ENCODE measurements at regions of chr10 and their contacts with region 1.

Region 1: GRCh38 chr10:88401671-88402347 is 181.3 kb downstream of the RNLS start:
- DNase-seq: no peak
- H3K4me3 ChIP-seq: no peak overlapping the region
- H3K27me3 ChIP-seq: no peaks in the 10 kb centered on the region
- CTCF ChIP-seq: peak; percentile 50; the same call in 1 of the 2 replicates

Region 2: GRCh38 chr10:88343761-88344484 is 57.9 kb before region 1 on chr10:
- CTCF ChIA-PET with region 1: no interaction called
- POLR2A ChIA-PET with region 1: no interaction called
- DNase-seq: no peak
- H3K4me3 ChIP-seq: no peak overlapping the region
- H3K27me3 ChIP-seq: no peaks in the 10 kb centered on the region
- CTCF ChIP-seq: no peak

Region 3: DNA sequence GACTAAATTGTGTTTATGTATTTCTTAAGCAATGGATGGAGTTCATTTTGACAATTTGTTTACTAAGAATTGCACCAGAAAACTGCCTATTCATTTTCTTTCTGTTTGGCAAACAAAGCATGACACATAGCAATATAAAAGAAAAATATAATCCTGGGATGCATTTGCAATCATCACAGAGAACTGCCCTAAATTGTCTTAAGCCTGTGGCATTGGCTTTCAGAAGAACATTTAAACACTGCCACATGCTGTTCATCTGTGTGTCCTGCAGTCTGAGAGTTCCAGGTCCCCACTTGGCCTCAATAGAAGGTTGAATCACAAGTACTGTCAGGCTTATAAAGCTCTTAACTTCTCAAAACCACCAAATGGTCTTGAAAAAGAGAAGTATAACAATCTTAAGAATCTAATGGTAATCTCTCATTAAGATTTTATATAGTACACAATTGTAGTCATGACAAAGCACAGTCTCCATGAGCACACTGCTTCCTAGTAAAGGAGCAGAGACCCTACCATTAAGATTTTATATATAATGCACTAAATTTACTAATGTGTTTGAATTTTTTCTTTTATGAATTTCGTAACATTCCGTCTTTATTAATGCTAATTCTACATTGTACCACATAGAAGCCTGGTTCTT is 151.4 kb after region 1 on chr10:
- CTCF ChIA-PET with region 1: interaction called, 19 read pairs
- POLR2A ChIA-PET with region 1: no interaction called
- DNase-seq: peak; percentile 56
- H3K4me3 ChIP-seq: no peak overlapping the region
- H3K27me3 ChIP-seq: no peaks in the 10 kb centered on the region
- CTCF ChIP-seq: peak; percentile 84

Measured in BJ (cell line).